Esophagus muscularis mucosa (tissue), 4 donors: ENCODE measurements at regions of chr18 and their contacts with region 1.

Region 1: GRCh38 chr18:9136315-9137155 is at the start of gene ANKRD12:
- DNase-seq: peak; percentile 99
- H3K4me3 ChIP-seq: peak within 1 kb of the TSS; percentile 71 to 89 (median 83)
- H3K27ac ChIP-seq: peak within 1 kb of the TSS; percentile 96 to 99 (median 98)
- H3K4me1 ChIP-seq: peaks cover 47 to 67% (median 61%) of the 10 kb centered on the region in 4 donors
- H3K27me3 ChIP-seq: no peaks in the 10 kb centered on the region
- CTCF ChIP-seq: no peak
- EP300 ChIP-seq: no peak
- POLR2A ChIP-seq: peak; percentile 86
- total RNA-seq, gene ANKRD12: 65.2 to 108 (median 92.9) TPM

Region 2: GRCh38 chr18:9102508-9103375 is 33.8 kb before region 1 on chr18 and contains the start of gene NDUFV2:
- intact Hi-C with region 1: loop called (anchors 2 kb)
- DNase-seq: peak; percentile 98
- H3K4me3 ChIP-seq: peak within 1 kb of the TSS; percentile 61 to 79 (median 72)
- H3K27ac ChIP-seq: peak within 1 kb of the TSS; percentile 88 to 95 (median 92)
- H3K4me1 ChIP-seq: peaks cover 41 to 64% (median 56%) of the 10 kb centered on the region in 4 donors
- H3K27me3 ChIP-seq: no peaks in the 10 kb centered on the region
- CTCF ChIP-seq: no peak
- EP300 ChIP-seq: no peak
- POLR2A ChIP-seq: peak; percentile 80
- total RNA-seq, gene NDUFV2: 120 to 229 (median 175) TPM

Region 3: DNA sequence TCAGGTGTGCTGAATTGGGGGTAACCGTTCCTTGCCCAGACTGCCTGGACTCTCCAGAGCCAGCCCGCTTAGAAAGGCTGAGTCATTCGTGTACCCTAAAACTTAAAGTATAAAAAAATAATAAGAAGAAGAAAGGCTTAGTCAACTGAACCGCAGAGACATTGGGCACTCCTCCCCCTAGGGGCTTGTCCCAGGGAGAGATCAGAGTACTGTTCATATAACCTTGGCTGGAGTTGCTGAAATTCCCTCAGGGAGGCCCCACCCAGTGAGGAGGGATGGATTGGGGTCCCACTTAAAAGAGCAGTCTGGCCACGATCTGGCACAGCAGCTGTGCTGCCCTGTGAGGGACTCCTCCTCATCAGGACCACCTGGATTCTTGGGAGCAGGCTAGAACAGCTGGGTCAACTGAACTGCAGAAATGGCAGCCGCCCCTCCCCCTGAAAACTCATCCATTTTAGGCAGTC is 37.3 kb after region 1 on chr18:
- intact Hi-C with region 1: no loop called
- DNase-seq: no peak
- H3K4me3 ChIP-seq: no peak overlapping the region
- H3K27ac ChIP-seq: no peak overlapping the region
- H3K4me1 ChIP-seq: peaks cover 37 to 65% (median 52%) of the 10 kb centered on the region in 4 donors
- H3K27me3 ChIP-seq: no peaks in the 10 kb centered on the region
- CTCF ChIP-seq: no peak
- EP300 ChIP-seq: no peak
- POLR2A ChIP-seq: no peak

Region 4: DNA sequence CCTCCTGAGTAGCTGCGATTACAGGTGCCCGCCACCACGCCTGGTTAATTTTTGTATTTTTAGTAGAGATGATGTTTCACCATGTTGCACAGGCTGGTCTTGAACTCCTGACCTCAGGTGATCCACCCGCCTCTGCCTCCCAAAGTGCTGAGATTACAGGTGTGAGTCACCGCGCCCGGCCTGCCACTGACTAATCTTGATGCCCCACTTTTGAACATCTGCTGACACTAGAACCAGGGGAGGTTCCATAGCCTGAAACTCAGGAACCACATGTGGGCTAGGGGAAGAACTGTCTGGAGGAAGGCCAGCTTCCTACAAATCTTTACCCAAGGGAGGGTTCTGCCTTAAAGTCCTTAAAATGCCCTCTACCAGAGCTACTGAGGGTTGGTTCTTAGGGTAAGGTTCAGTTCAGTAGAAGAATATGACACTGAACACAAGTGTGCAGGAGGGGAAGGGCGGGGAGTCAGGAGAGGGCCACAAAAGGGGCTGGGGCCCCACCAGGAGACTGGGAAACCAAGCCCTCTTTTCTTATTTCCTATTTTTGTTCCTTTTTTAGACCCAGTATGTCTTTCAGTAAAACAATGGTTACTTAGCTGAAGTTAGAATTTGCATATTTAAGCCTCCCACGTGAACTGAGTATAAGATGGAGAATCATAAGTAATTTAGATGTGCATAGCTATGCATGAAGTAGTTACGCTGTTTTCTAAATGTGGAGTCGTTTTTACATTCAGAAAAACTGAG is 565.2 kb after region 1 on chr18:
- intact Hi-C with region 1: no loop called
- DNase-seq: no peak
- H3K4me3 ChIP-seq: no peak overlapping the region
- H3K27ac ChIP-seq: no peak overlapping the region
- H3K4me1 ChIP-seq: peaks cover 5 to 18% (median 11%) of the 10 kb centered on the region in 4 donors
- H3K27me3 ChIP-seq: no peaks in the 10 kb centered on the region
- CTCF ChIP-seq: no peak
- EP300 ChIP-seq: no peak
- POLR2A ChIP-seq: no peak